ENCODE measurements at regions of chr2 and their contacts with region 1.

Region 1: DNA sequence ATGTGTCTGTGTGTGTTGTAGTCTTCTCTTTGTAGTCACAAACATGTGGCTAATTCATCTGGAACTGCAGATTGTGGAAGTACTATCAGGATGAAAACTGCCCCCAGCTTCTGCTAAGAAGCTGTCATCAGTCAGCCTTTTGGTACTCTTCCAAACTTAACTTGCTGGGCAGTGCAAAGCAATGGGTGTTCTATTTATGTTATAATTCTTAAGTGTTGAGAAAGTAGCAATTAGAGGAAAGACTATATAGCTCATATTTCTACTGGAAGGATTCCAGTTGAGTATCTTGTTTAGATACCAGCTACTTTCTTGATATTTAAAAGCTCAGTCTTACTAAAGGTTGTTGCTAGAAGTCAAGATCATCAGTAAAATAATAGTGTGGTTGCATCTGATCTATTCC is 52.1 kb downstream of the SLC38A11 start:
- DNase-seq: no peak
- ATAC-seq: no peak
- H3K4me3 Mint-ChIP-seq: no peak overlapping the region
- H3K27ac Mint-ChIP-seq: no peak overlapping the region
- H3K4me1 Mint-ChIP-seq: peaks cover 4% of the 10 kb centered on the region
- H3K27me3 Mint-ChIP-seq: no peaks in the 10 kb centered on the region
- CTCF ChIP-seq: no peak

Region 2: GRCh38 chr2:164808776-164809175 is 94.4 kb before region 1 on chr2:
- CTCF ChIA-PET with region 1: no interaction called
- POLR2A ChIA-PET with region 1: no interaction called
- DNase-seq: no peak
- ATAC-seq: no peak
- H3K4me3 Mint-ChIP-seq: no peak overlapping the region
- H3K27ac Mint-ChIP-seq: no peak overlapping the region
- H3K4me1 Mint-ChIP-seq: no peaks in the 10 kb centered on the region
- H3K27me3 Mint-ChIP-seq: no peaks in the 10 kb centered on the region
- CTCF ChIP-seq: no peak

Region 3: GRCh38 chr2:164868563-164869419 is 34.4 kb before region 1 on chr2:
- CTCF ChIA-PET with region 1: no interaction called
- POLR2A ChIA-PET with region 1: no interaction called
- DNase-seq: no peak
- ATAC-seq: no peak
- H3K4me3 Mint-ChIP-seq: no peak overlapping the region
- H3K27ac Mint-ChIP-seq: no peak overlapping the region
- H3K4me1 Mint-ChIP-seq: no peaks in the 10 kb centered on the region; the same call in 1 of the 2 replicates
- H3K27me3 Mint-ChIP-seq: no peaks in the 10 kb centered on the region
- CTCF ChIP-seq: no peak

Region 4: GRCh38 chr2:164913640-164914350 is 10.6 kb after region 1 on chr2:
- CTCF ChIA-PET with region 1: interaction called, 11 read pairs
- POLR2A ChIA-PET with region 1: no interaction called
- DNase-seq: no peak
- ATAC-seq: peak; percentile 38
- H3K4me3 Mint-ChIP-seq: 0 out of 2 replicates have a peak overlapping the region, but pooled peaks have one; percentile 45
- H3K27ac Mint-ChIP-seq: peak overlapping the region; percentile 16; the same call in 1 of the 2 replicates
- H3K4me1 Mint-ChIP-seq: peaks cover 41% of the 10 kb centered on the region
- H3K27me3 Mint-ChIP-seq: no peaks in the 10 kb centered on the region
- CTCF ChIP-seq: no peak